ENCODE measurements at regions of chr16 and their contacts with region 1.

Region 1: GRCh38 chr16:56203052-56203451 is 11.8 kb downstream of the GNAO1 start:
- DNase-seq: peak; percentile 84
- H3K4me3 Mint-ChIP-seq: no peak overlapping the region
- H3K27ac Mint-ChIP-seq: no peak overlapping the region
- H3K4me1 Mint-ChIP-seq: peaks cover 22% of the 10 kb centered on the region
- H3K27me3 Mint-ChIP-seq: peaks cover 24% of the 10 kb centered on the region

Region 2: DNA sequence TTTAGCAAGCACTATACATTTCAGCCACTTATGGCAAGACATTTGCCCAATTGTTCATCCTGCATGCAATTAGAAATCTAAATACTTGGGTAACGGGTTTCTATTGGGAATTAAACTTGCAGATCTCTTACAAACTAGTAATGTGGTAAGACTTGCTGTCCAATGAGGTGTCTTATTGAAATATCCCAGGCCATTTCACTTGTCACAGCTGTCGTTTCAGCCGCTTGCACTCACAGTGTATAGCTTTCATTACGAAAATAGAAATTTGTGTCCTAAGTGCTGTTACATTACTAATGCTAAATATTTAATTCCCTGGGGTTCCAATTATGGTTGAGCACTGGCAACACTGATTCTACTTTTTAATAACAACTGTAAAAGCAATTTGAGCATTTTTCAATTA is 1312.7 kb before region 1 on chr16:
- intact Hi-C with region 1: no loop called
- DNase-seq: no peak
- H3K4me3 Mint-ChIP-seq: no peak overlapping the region
- H3K27ac Mint-ChIP-seq: no peak overlapping the region
- H3K4me1 Mint-ChIP-seq: no peaks in the 10 kb centered on the region
- H3K27me3 Mint-ChIP-seq: no peaks in the 10 kb centered on the region

Region 3: GRCh38 chr16:55944377-55944802 is 258.7 kb before region 1 on chr16:
- intact Hi-C with region 1: loop called (anchors 2 kb)
- DNase-seq: peak; percentile 84
- H3K4me3 Mint-ChIP-seq: no peak overlapping the region
- H3K27ac Mint-ChIP-seq: no peak overlapping the region
- H3K4me1 Mint-ChIP-seq: no peaks in the 10 kb centered on the region
- H3K27me3 Mint-ChIP-seq: peaks cover 34% of the 10 kb centered on the region

Region 4: GRCh38 chr16:56191156-56191815 is 11.8 kb before region 1 on chr16 and contains the start of gene GNAO1:
- intact Hi-C with region 1: loop called (anchors 1 kb)
- DNase-seq: peak; percentile 87
- H3K4me3 Mint-ChIP-seq: peak within 1 kb of the TSS; percentile 83
- H3K27ac Mint-ChIP-seq: peak within 1 kb of the TSS; percentile 66
- H3K4me1 Mint-ChIP-seq: peaks cover 28% of the 10 kb centered on the region
- H3K27me3 Mint-ChIP-seq: peaks cover 78% of the 10 kb centered on the region
- total RNA-seq, gene GNAO1: 2.0 and 2.3 TPM in 2 replicates

Region 5: GRCh38 chr16:56317998-56318826 is 115.2 kb after region 1 on chr16:
- intact Hi-C with region 1: loop called (anchors 10 kb)
- DNase-seq: peak; percentile 94
- H3K4me3 Mint-ChIP-seq: peak overlapping the region; percentile 38
- H3K27ac Mint-ChIP-seq: no peak overlapping the region
- H3K4me1 Mint-ChIP-seq: peaks cover 4% of the 10 kb centered on the region
- H3K27me3 Mint-ChIP-seq: peaks cover 5% of the 10 kb centered on the region

Region 6: GRCh38 chr16:56450986-56451752 is 248.1 kb after region 1 on chr16 and contains the starts of genes NUDT21 and OGFOD1:
- intact Hi-C with region 1: loop called (anchors 2 kb)
- DNase-seq: peak; percentile 97
- H3K4me3 Mint-ChIP-seq: peak within 1 kb of the TSS; percentile 94
- H3K27ac Mint-ChIP-seq: peak within 1 kb of the TSS; percentile 95
- H3K4me1 Mint-ChIP-seq: peaks cover 41% of the 10 kb centered on the region
- H3K27me3 Mint-ChIP-seq: no peaks in the 10 kb centered on the region
- total RNA-seq, gene NUDT21: 282 and 297 TPM in 2 replicates
- total RNA-seq, gene OGFOD1: 87.0 and 89.2 TPM in 2 replicates